A673 (cell line): ENCODE measurements at regions of chr18 and their contacts with region 1.

Region 1: GRCh38 chr18:62584241-62585120 is 61.7 kb downstream of the ZCCHC2 start:
- DNase-seq: peak; percentile 93
- H3K4me3 ChIP-seq: no peak overlapping the region
- H3K27ac ChIP-seq: no peak overlapping the region
- H3K4me1 ChIP-seq: no peaks in the 10 kb centered on the region
- H3K27me3 ChIP-seq: no peaks in the 10 kb centered on the region
- CTCF ChIP-seq: peak; percentile 97

Region 2: DNA sequence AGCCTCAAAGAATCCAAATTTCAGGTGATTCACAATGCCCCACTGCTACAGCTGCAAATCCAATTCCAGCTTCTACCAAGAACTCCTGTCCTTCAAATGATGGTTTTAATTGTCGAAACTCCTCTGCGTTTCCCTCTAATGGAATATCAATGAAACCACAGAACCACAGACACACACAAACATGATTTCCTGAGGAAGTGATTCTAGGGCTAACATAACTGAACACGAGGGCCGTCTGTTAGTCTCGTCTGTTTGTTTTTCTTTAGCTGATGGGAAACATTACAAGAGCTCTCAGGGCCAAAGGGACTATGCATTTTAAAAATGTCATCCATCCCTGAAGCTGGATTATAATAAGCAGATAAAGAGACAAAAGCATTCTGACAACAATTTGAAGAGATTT is 751.1 kb before region 1 on chr18:
- CTCF ChIA-PET with region 1: no interaction called
- POLR2A ChIA-PET with region 1: no interaction called
- intact Hi-C with region 1: no loop called
- DNase-seq: peak; percentile 63
- H3K4me3 ChIP-seq: no peak overlapping the region
- H3K27ac ChIP-seq: no peak overlapping the region
- H3K4me1 ChIP-seq: peaks cover 11% of the 10 kb centered on the region
- H3K27me3 ChIP-seq: no peaks in the 10 kb centered on the region
- CTCF ChIP-seq: no peak

Region 3: GRCh38 chr18:62324917-62325805 is 259.3 kb before region 1 on chr18 and contains the start of gene TNFRSF11A:
- CTCF ChIA-PET with region 1: interaction called, 4 read pairs
- POLR2A ChIA-PET with region 1: no interaction called
- intact Hi-C with region 1: loop called (anchors 5 kb)
- DNase-seq: peak; percentile 33
- H3K4me3 ChIP-seq: peak within 1 kb of the TSS; percentile 56
- H3K27ac ChIP-seq: no peak within 1 kb of the TSS
- H3K4me1 ChIP-seq: no peaks in the 10 kb centered on the region
- H3K27me3 ChIP-seq: peaks cover 56% of the 10 kb centered on the region
- CTCF ChIP-seq: no peak; the same call in 1 of the 2 replicates
- total RNA-seq, gene TNFRSF11A: 0.37 TPM in 2 replicates

Region 4: GRCh38 chr18:62450546-62451406 is 133.7 kb before region 1 on chr18:
- CTCF ChIA-PET with region 1: no interaction called
- POLR2A ChIA-PET with region 1: no interaction called
- intact Hi-C with region 1: no loop called
- DNase-seq: peak; percentile 81
- H3K4me3 ChIP-seq: no peak overlapping the region
- H3K27ac ChIP-seq: peak overlapping the region; percentile 18
- H3K4me1 ChIP-seq: peaks cover 39% of the 10 kb centered on the region
- H3K27me3 ChIP-seq: no peaks in the 10 kb centered on the region
- CTCF ChIP-seq: no peak

Region 5: DNA sequence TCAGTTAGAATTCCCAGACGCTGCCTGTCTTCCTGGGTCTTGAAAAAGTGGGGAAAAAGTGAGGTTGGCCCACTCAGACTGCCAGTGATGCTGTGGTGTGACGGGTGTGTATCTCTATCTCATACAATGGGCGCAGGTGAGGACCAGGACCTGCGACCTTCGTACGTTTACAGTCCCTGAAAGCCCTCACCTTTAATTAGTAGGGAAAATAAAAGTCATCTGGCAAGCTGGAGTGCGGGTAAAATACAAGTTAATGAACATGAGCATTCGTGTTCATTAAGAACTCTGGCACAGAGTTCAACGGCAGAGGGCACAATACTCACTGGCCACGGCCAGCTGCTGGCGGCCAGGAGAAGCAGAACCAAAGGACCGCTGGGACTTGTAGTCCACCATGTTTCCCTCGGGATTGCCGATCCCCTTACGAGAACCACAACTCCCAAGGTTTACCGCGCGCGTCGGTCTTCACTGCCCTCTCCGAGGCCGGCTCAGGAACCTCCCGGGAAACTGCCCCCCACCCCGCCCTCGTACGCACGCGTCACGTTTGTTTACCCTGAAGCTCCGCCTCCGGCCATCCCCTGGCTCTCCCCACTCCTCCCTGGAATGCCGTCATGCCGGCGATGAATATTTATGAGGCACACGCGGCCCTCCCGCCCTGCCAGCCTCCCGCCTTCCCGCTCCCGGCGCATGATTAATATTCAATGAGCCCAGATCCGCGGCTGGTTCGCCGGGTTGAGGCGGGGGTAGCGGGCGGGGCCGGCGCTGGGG is 130.4 kb after region 1 on chr18:
- CTCF ChIA-PET with region 1: no interaction called
- POLR2A ChIA-PET with region 1: no interaction called
- intact Hi-C with region 1: loop called (anchors 5 kb)
- DNase-seq: peak; percentile 100
- H3K4me3 ChIP-seq: peak overlapping the region; percentile 76
- H3K27ac ChIP-seq: peak overlapping the region; percentile 83
- H3K4me1 ChIP-seq: peaks cover 29% of the 10 kb centered on the region
- H3K27me3 ChIP-seq: no peaks in the 10 kb centered on the region
- CTCF ChIP-seq: peak; percentile 79

Region 6: DNA sequence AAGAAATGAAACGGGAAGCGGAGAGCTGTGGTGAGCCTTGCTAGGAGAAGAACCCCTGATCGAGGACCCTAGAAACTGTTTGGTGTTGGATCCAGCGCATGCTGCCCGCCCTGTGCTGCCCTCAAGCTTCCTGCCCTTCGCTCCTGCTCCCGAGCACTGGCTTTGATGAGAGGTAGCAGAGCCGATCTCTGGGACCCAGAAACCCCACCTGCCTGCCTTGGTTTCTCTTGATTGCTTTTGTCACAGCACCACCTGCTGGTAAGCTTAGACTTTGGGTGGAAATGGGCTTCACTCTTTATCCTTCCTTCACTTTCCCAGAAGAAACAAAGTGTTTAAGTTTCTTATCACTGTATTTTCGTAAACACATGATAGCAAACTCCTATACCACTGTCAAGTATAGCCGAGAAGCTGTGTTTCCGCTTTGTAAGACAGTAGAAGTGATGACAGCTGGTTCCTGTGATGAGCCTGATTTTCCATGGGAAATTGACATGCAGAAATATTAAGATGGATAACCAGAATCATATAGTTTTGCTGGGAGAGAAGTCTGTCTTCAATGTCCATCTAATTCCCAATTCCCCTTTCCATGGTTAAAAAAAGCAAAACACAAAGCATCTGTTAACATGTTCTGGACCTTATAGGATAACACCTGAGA is 398.2 kb after region 1 on chr18:
- CTCF ChIA-PET with region 1: interaction called, 12 read pairs
- POLR2A ChIA-PET with region 1: no interaction called
- intact Hi-C with region 1: loop called (anchors 1 kb)
- DNase-seq: peak; percentile 62
- H3K4me3 ChIP-seq: no peak overlapping the region
- H3K27ac ChIP-seq: no peak overlapping the region
- H3K4me1 ChIP-seq: no peaks in the 10 kb centered on the region
- H3K27me3 ChIP-seq: no peaks in the 10 kb centered on the region
- CTCF ChIP-seq: peak; percentile 85